ENCODE measurements at regions of chr5 and their contacts with region 1.

Region 1: GRCh38 chr5:80654391-80655230 is at the starts of genes DHFR and MSH3:
- DNase-seq: peak; percentile 83
- ATAC-seq: peak; percentile 55
- H3K4me3 ChIP-seq: peak within 1 kb of the TSS; percentile 100
- H3K27ac ChIP-seq: peak within 1 kb of the TSS; percentile 98
- H3K4me1 ChIP-seq: peaks cover 6% of the 10 kb centered on the region
- H3K27me3 ChIP-seq: no peaks in the 10 kb centered on the region
- CTCF ChIP-seq: 0 out of 2 replicates have a peak, but pooled peaks have one; percentile 7
- POLR2A ChIP-seq: peak; percentile 69
- RAD21 ChIP-seq: no peak
- total RNA-seq, gene DHFR: 29.4 and 44.4 TPM in 2 replicates
- total RNA-seq, gene MSH3: 13.3 and 16.9 TPM in 2 replicates

Region 2: DNA sequence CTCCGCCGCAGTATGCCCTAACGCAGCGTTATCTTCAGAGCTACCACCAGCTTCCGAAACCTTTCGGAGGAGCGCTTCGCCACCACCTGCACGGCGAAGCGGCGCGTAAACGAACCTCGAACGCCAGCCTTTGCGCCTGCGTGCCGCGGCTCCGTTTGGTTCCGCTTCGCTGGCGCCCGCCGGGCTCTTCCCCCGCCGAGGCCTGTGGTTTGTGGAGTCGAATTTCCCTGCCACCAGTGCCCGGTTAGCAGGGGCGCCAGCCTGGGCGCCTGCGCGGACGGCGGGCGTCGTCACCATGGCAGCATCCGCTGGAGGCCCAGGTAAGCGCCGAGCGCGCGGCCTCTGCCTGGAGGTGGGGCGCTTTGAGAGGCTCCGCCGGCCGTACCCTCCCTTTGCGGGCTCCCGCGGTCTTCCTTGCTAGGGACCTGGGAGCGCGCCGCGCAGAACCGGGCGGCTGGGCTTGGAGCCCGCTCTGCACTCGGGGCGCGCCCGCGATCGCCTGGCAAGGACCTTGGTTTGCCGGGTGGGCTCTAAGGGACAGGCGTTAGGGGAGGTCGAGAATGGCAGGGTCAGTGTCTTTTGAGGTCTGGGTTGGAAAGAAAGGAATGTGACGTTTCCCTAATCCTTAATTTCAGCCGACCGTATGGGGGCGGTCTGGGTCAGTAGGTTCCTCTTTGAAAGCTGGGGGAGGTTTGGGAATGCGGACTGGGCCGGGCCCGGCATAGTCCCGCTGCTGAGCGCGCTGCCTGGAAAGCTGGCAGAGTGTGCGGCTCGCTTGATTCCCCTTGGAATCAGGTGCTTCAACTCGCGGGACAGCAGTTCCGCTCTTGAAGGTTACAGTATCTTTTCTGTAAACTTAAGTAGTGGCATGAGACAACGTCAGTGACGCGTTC is 166.5 kb before region 1 on chr5 and contains the start of gene FAM151B:
- CTCF ChIA-PET with region 1: no interaction called
- POLR2A ChIA-PET with region 1: no interaction called
- dilution Hi-C with region 1: no loop called
- in situ Hi-C with region 1: no loop called
- intact Hi-C with region 1: loop called (anchors 5 kb)
- DNase-seq: peak; percentile 87
- ATAC-seq: peak; percentile 97
- H3K4me3 ChIP-seq: peak within 1 kb of the TSS; percentile 87
- H3K27ac ChIP-seq: peak within 1 kb of the TSS; percentile 74
- H3K4me1 ChIP-seq: no peaks in the 10 kb centered on the region
- H3K27me3 ChIP-seq: no peaks in the 10 kb centered on the region
- CTCF ChIP-seq: peak; percentile 24; the same call in 1 of the 2 replicates
- POLR2A ChIP-seq: peak; percentile 52; the same call in 1 of the 2 replicates
- RAD21 ChIP-seq: no peak; the same call in 1 of the 2 replicates
- total RNA-seq, gene FAM151B: 2.8 and 2.9 TPM in 2 replicates

Measured in IMR-90 (cell line).